ENCODE measurements at regions of chr4 and their contacts with region 1.

Region 1: GRCh38 chr4:87973283-87974169 is 2.0 kb upstream of the SPP1 start:
- DNase-seq: peak; percentile 28
- H3K4me3 Mint-ChIP-seq: no peak overlapping the region
- H3K27ac Mint-ChIP-seq: no peak overlapping the region
- H3K4me1 Mint-ChIP-seq: peaks cover 9% of the 10 kb centered on the region
- H3K27me3 Mint-ChIP-seq: peaks cover 48% of the 10 kb centered on the region

Region 2: DNA sequence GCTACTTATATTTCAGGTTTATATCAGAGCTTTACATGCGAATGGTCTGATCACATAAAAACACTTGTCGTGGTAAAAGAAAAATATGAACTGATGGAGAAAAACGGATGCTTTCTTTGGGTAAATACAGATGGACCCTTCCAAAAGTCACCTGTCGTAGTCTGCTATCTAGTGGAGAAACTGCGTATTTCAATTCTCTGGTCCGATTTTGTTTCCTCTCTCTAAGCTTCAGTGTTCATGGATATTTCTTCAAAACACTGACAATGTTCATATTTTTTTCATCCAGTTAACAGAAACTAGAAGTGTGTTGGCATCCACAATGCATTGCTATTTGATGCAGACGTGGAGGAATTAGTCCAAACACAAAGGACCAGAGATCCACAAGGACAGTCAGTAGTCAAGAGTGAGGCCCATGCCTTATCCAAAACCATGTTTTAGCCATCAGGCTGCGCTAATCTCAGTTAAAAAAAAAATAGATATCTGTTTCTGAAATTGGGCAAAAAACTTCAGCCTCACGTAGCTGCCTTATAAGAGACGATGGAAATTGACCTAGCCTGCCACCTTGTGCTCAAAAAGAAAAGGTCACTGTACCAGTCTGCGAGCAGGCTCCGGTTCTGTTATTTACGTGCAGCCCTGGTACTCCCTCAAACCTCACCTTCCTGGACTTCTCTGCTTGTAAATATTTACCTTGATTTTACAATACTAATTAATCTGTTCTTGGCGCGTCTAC is 124.7 kb before region 1 on chr4:
- CTCF ChIA-PET with region 1: interaction called, 23 read pairs
- POLR2A ChIA-PET with region 1: no interaction called
- DNase-seq: peak; percentile 45
- H3K4me3 Mint-ChIP-seq: no peak overlapping the region
- H3K27ac Mint-ChIP-seq: no peak overlapping the region
- H3K4me1 Mint-ChIP-seq: peaks cover 13% of the 10 kb centered on the region
- H3K27me3 Mint-ChIP-seq: peaks cover 38% of the 10 kb centered on the region

Region 3: GRCh38 chr4:87961993-87962392 is 11.5 kb before region 1 on chr4:
- CTCF ChIA-PET with region 1: interaction called, 11 read pairs
- POLR2A ChIA-PET with region 1: no interaction called
- DNase-seq: no peak
- H3K4me3 Mint-ChIP-seq: no peak overlapping the region
- H3K27ac Mint-ChIP-seq: no peak overlapping the region
- H3K4me1 Mint-ChIP-seq: no peaks in the 10 kb centered on the region
- H3K27me3 Mint-ChIP-seq: peaks cover 8% of the 10 kb centered on the region

Region 4: GRCh38 chr4:87985097-87985886 is 11.8 kb after region 1 on chr4:
- CTCF ChIA-PET with region 1: interaction called, 15 read pairs
- POLR2A ChIA-PET with region 1: no interaction called
- DNase-seq: peak; percentile 57
- H3K4me3 Mint-ChIP-seq: no peak overlapping the region
- H3K27ac Mint-ChIP-seq: no peak overlapping the region
- H3K4me1 Mint-ChIP-seq: peaks cover 10% of the 10 kb centered on the region
- H3K27me3 Mint-ChIP-seq: peaks cover 27% of the 10 kb centered on the region

Measured in activated CD4-positive, alpha-beta memory T cell treated with anti-CD3 and anti-CD28 coated beads, Interleukin-2, amount 10 ng/mL, durations not matched to agents 7 days and 5 days (primary cell).